ENCODE measurements at regions of chr13 and their contacts with region 1.

Region 1: GRCh38 chr13:40102856-40103255 is 447.4 kb downstream of the COG6 start:
- DNase-seq: no peak
- H3K4me3 ChIP-seq: no peak overlapping the region
- H3K27ac ChIP-seq: no peak overlapping the region
- H3K4me1 ChIP-seq: no peaks in the 10 kb centered on the region
- H3K27me3 ChIP-seq: no peaks in the 10 kb centered on the region
- CTCF ChIP-seq: no peak
- POLR2A ChIP-seq: no peak

Region 2: DNA sequence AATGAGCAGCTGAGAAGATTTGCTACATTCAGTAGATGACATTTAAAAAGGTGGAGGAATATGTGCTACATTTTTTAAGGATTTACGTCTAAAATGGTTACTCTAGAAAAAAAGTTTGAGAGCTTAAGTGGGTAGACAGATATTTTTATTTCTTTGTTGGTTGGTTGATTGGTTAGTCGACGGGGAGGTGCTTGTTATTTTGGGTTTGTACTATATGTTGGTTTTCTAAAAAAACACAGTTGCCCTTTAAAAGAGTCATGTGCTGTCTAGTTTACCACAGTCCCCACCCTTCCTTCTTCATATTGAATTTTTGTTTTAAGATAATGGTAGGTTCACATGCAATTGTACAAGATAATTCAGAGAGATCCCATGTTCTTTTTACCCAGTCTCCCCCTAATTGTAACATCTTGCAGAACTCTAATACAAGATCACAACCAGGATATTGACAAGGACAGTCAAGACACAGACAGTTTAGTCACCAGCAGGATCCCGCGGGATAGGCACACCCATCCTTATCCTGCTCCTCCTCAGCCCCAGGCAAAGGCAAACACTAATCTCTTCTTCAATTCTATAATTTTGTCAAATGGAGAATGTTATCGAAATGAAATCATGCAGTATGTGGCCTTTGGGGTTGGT is 392.2 kb after region 1 on chr13:
- intact Hi-C with region 1: loop called (anchors 5 kb)
- DNase-seq: no peak
- H3K4me3 ChIP-seq: no peak overlapping the region
- H3K27ac ChIP-seq: no peak overlapping the region
- H3K4me1 ChIP-seq: no peaks in the 10 kb centered on the region
- H3K27me3 ChIP-seq: no peaks in the 10 kb centered on the region
- CTCF ChIP-seq: no peak
- POLR2A ChIP-seq: no peak

Region 3: DNA sequence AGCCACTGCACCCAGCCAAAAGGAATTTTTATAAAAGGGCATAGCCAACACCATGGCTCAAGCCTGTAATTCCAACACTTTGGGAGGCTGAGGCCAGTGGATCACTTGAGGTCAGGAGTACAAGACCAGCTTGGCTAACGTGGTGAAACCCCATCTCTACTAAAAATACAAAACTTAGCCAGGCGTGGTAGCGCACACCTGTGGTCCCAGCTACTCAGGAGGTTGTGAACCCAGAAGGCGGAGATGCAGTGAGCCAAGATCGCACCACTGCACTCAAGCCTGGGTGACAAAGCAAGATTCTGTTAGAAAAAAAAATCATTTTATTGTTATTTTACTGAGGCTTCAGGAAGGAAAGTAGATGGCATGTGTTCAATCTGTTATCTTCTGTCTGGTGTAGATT is 594.9 kb after region 1 on chr13:
- intact Hi-C with region 1: no loop called
- DNase-seq: no peak
- H3K4me3 ChIP-seq: no peak overlapping the region
- H3K27ac ChIP-seq: no peak overlapping the region
- H3K4me1 ChIP-seq: no peaks in the 10 kb centered on the region
- H3K27me3 ChIP-seq: no peaks in the 10 kb centered on the region
- CTCF ChIP-seq: no peak
- POLR2A ChIP-seq: no peak